Activated T-helper 2 cell treated with anti-CD3 and anti-CD28 coated beads, Interferon-gamma antibody, Interleukin-2, Interleukin-4, amounts not matched to agents 10 μg/mL and 5 μg/mL and 100 μg/mL, durations not matched to agents 14 hours and 24 hours and 36 hours (primary cell): ENCODE measurements at regions of chr13 and their contacts with region 1.

Region 1: GRCh38 chr13:100235311-100235901 is 146.5 kb downstream of the PCCA start:
- DNase-seq: no peak
- H3K4me3 Mint-ChIP-seq: no peak overlapping the region
- H3K27ac Mint-ChIP-seq: no peak overlapping the region
- H3K4me1 Mint-ChIP-seq: peaks cover 4% of the 10 kb centered on the region
- H3K27me3 Mint-ChIP-seq: peaks cover 19% of the 10 kb centered on the region

Region 2: GRCh38 chr13:99916366-99917103 is 318.9 kb before region 1 on chr13:
- intact Hi-C with region 1: loop called (anchors 5 kb)
- DNase-seq: no peak
- H3K4me3 Mint-ChIP-seq: no peak overlapping the region
- H3K27ac Mint-ChIP-seq: no peak overlapping the region
- H3K4me1 Mint-ChIP-seq: peaks cover 6% of the 10 kb centered on the region
- H3K27me3 Mint-ChIP-seq: peaks cover 39% of the 10 kb centered on the region

Region 3: GRCh38 chr13:99980201-99980823 is 255.1 kb before region 1 on chr13:
- intact Hi-C with region 1: loop called (anchors 5 kb)
- DNase-seq: no peak
- H3K4me3 Mint-ChIP-seq: no peak overlapping the region
- H3K27ac Mint-ChIP-seq: no peak overlapping the region
- H3K4me1 Mint-ChIP-seq: no peaks in the 10 kb centered on the region
- H3K27me3 Mint-ChIP-seq: peaks cover 66% of the 10 kb centered on the region

Region 4: DNA sequence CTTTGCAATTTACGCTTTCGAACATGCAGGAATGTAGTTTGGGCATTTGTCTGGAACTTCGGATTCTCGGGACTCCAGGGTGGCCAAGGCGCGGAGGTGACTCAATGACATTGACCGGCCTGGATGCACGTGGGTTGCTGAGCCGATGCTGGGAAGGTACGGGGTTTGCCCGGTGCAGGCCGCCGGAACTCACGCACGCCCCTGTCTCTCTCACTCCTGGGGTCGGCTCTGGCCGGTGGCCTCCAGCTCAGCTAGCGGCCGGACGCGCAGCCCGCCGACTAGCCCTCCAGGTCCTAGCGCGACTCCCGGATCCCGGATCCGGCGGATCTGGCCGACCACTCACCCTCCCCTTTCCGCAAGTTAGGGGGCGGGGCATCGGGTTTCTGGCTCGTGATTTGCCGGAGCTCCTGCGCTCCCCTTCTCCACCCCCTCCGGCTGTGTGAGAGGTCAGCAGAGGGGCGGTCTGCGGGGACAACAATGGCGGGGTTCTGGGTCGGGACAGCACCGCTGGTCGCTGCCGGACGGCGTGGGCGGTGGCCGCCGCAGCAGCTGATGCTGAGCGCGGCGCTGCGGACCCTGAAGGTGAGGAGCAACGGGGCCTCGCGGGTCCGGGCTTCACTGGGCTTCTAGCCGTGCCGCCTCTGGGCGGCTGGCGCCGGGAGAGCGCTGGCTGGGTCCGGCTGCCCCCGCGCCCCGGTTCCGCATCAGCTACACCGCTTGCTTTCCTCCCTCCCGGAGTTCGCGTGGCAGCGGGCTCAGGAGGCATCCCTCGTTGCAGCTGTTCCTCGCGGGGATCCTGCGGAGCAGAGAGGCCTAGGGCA is 146.6 kb before region 1 on chr13 and contains the start of gene PCCA:
- intact Hi-C with region 1: loop called (anchors 10 kb)
- DNase-seq: peak; percentile 69
- H3K4me3 Mint-ChIP-seq: peak within 1 kb of the TSS; percentile 91
- H3K27ac Mint-ChIP-seq: peak within 1 kb of the TSS; percentile 68
- H3K4me1 Mint-ChIP-seq: peaks cover 16% of the 10 kb centered on the region
- H3K27me3 Mint-ChIP-seq: no peaks in the 10 kb centered on the region
- total RNA-seq, gene PCCA: 6.7 and 7.1 TPM in 2 replicates

Region 5: GRCh38 chr13:100363285-100363711 is 127.9 kb after region 1 on chr13:
- intact Hi-C with region 1: no loop called
- DNase-seq: no peak
- H3K4me3 Mint-ChIP-seq: no peak overlapping the region
- H3K27ac Mint-ChIP-seq: no peak overlapping the region
- H3K4me1 Mint-ChIP-seq: peaks cover 10% of the 10 kb centered on the region
- H3K27me3 Mint-ChIP-seq: no peaks in the 10 kb centered on the region

Region 6: DNA sequence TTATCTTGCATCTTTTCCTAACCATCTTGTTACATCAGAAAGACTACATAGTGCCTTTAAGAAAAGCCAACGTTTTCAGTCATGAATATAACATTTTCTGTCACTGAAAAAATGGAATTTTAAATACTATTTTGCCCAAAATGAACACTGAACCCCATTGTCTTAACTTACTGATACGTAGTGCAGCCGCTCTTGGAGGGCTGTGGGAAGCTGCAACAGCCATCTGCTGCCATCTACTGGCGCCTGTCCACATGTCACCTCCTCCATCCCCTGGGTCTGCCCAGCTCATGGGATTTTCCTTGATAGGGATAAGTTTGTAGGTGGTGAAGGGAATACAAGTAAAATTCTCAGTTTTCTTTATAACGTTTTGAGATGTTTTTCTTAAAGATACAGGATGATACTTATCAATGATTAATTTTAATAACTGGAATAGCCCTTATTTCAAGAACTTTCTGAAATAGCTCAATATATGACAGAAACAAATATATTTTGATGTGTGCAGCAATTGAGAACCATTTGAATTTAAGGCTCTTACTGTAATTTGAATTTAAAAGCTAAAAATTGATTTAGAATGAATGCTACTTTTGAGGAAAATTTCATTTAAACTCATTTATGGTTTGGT is 279.5 kb after region 1 on chr13:
- intact Hi-C with region 1: loop called (anchors 5 kb)
- DNase-seq: peak; percentile 51
- H3K4me3 Mint-ChIP-seq: no peak overlapping the region
- H3K27ac Mint-ChIP-seq: no peak overlapping the region
- H3K4me1 Mint-ChIP-seq: peaks cover 19% of the 10 kb centered on the region
- H3K27me3 Mint-ChIP-seq: peaks cover 35% of the 10 kb centered on the region